ENCODE measurements at regions of chr11 and their contacts with region 1.

Region 1: DNA sequence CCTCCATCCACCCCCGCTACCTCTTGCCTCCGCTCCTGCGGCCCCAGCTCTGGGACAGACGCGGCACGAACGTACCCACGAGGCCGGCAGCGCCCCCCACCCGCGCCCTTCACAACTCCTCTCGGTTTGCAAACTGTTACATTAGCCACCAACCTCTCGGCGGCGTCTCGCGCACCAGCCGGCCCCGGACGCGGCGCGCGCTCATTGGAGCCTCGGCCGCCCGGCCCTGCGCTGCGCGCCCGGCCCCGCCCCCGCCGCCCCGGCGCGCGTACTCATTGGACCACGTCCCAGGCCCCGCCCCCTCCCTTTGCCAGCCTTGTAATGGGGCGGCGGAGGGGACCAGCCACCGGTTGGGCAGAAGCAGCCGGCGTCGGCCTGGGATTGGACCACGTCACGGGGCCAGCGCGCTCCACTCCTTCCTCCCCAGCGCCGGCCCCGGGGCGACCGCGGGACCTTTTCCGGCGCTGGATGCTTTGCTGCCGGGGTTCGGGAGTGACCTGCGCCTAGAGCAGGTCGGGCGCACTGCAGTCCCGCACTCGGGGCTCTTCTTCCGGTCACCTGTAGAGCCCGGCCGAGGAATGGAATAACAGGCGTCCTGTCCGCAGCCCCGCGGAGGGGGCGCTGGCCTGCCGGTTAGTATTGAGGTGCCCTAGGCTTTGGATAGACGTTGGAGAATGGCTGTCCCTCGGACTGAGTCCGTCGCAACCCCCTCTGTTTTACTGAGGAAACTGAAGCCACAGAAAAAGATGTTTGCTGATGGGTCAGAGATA is at the start of gene HYOU1:
- DNase-seq: peak; percentile 96 to 97 (median 97)
- H3K4me3 ChIP-seq: peak within 1 kb of the TSS; percentile 71 to 91 (median 88)
- H3K4me3 Mint-ChIP-seq: peak within 1 kb of the TSS; percentile 93 to 94
- H3K27ac ChIP-seq: peak within 1 kb of the TSS; percentile 69 to 94
- H3K27ac Mint-ChIP-seq: peak within 1 kb of the TSS; percentile 89 to 96 (median 96)
- H3K4me1 ChIP-seq: peaks cover 17 to 22% of the 10 kb centered on the region in 2 donors
- H3K4me1 Mint-ChIP-seq: peaks cover 21% of the 10 kb centered on the region
- H3K27me3 ChIP-seq: no peaks in the 10 kb centered on the region
- H3K27me3 Mint-ChIP-seq: peaks cover 0 to 1% (median 0%) of the 10 kb centered on the region in 3 donors
- CTCF ChIP-seq: no peak
- polyA plus RNA-seq, gene HYOU1: 8.4 to 34.9 (median 8.6) TPM

Region 2: GRCh38 chr11:119095066-119095880 is 38.1 kb after region 1 on chr11:
- intact Hi-C with region 1: loop called in 1 of 2 experiments (anchors 2 kb)
- DNase-seq: peak; percentile 99 to 100 (median 99)
- H3K4me3 ChIP-seq: peak overlapping the region; percentile 59 to 92 (median 72)
- H3K4me3 Mint-ChIP-seq: peak overlapping the region; percentile 87 to 91
- H3K27ac ChIP-seq: peak overlapping the region; percentile 60 to 81
- H3K27ac Mint-ChIP-seq: peak overlapping the region; percentile 84 to 92 (median 91)
- H3K4me1 ChIP-seq: peaks cover 41 to 50% of the 10 kb centered on the region in 2 donors
- H3K4me1 Mint-ChIP-seq: peaks cover 47% of the 10 kb centered on the region
- H3K27me3 ChIP-seq: no peaks in the 10 kb centered on the region
- H3K27me3 Mint-ChIP-seq: peaks cover 0 to 1% (median 0%) of the 10 kb centered on the region in 3 donors
- CTCF ChIP-seq: peak; percentile 42

Region 3: DNA sequence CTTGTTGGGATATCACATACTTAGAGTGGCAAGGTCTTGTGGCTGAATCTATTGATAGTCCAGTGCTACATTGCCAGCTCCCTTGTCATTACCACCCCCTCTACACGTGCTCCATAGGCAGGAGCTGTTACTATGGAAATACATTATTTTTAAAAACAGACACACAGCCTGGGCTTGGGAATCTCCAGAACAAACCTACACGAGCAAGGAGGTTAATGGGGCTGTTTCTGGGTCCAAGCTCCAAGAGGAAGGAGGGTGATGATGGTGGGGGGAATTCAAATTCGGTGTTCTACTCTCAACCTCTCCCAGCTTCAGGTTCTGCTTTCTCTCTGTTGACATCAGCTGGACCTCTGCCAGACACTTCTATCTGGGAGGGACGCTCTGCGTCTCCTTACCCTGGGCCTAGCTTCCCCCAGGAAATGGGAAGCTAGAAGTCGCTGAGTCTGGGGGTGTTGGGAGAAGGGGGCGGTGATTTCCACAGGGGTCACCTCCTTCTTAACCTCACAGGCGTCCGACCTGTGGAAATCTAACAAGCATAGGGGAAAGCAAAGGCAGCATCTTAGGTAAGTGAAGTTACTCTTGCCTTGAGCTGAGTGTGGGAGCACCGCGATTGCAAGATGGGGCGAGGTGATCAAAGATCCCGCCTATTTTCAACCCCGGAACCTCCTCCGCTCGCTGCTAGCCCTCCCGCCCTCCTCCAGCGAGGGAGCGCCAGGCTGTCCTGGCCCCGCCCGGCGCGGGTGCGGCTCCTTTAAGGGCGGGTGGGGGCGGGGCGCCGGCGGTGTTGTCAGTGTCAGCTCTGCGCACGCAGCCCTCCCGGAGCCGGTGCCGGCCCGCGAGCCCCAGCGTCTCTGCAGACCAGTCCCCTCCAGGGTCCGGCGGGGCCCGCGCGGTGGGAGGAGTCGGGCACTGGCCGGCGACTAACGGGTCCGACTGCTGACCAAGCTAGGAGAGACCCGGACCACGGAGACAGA is 49.7 kb after region 1 on chr11 and contains the start of gene C2CD2L:
- intact Hi-C with region 1: no loop called
- DNase-seq: peak; percentile 92 to 95 (median 93)
- H3K4me3 ChIP-seq: peak within 1 kb of the TSS; percentile 85 to 93 (median 92)
- H3K4me3 Mint-ChIP-seq: peak within 1 kb of the TSS; percentile 89 to 97
- H3K27ac ChIP-seq: peak within 1 kb of the TSS; percentile 86 to 93
- H3K27ac Mint-ChIP-seq: peak within 1 kb of the TSS; percentile 95 to 100 (median 99)
- H3K4me1 ChIP-seq: peaks cover 47 to 70% of the 10 kb centered on the region in 2 donors
- H3K4me1 Mint-ChIP-seq: peaks cover 65% of the 10 kb centered on the region
- H3K27me3 ChIP-seq: no peaks in the 10 kb centered on the region
- H3K27me3 Mint-ChIP-seq: no peaks in the 10 kb centered on the region
- CTCF ChIP-seq: no peak
- polyA plus RNA-seq, gene C2CD2L: 3.8 to 60.2 (median 6.4) TPM